Calu3 (cell line): ENCODE measurements at regions of chr22 and their contacts with region 1.

Region 1: GRCh38 chr22:35350539-35351503 is 30.1 kb upstream of the HMOX1 start:
- DNase-seq: peak; percentile 94
- H3K4me3 Mint-ChIP-seq: peak overlapping the region; percentile 96
- H3K27ac Mint-ChIP-seq: peak overlapping the region; percentile 57
- H3K4me1 Mint-ChIP-seq: peaks cover 20% of the 10 kb centered on the region
- H3K27me3 Mint-ChIP-seq: no peaks in the 10 kb centered on the region
- CTCF ChIP-seq: peak; percentile 93

Region 2: GRCh38 chr22:35399678-35400334 is 49.0 kb after region 1 on chr22 and contains the start of gene MCM5:
- CTCF ChIA-PET with region 1: no interaction called
- intact Hi-C with region 1: loop called (anchors 5 kb)
- DNase-seq: peak; percentile 97
- H3K4me3 Mint-ChIP-seq: peak within 1 kb of the TSS; percentile 100
- H3K27ac Mint-ChIP-seq: peak within 1 kb of the TSS; percentile 96
- H3K4me1 Mint-ChIP-seq: peaks cover 21% of the 10 kb centered on the region
- H3K27me3 Mint-ChIP-seq: no peaks in the 10 kb centered on the region
- CTCF ChIP-seq: no peak
- total RNA-seq, gene MCM5: 88.4 and 93.0 TPM in 2 replicates

Region 3: GRCh38 chr22:35430897-35431322 is 80.1 kb after region 1 on chr22:
- CTCF ChIA-PET with region 1: interaction called, 13 read pairs
- intact Hi-C with region 1: no loop called
- DNase-seq: peak; percentile 94
- H3K4me3 Mint-ChIP-seq: no peak overlapping the region
- H3K27ac Mint-ChIP-seq: no peak overlapping the region
- H3K4me1 Mint-ChIP-seq: no peaks in the 10 kb centered on the region
- H3K27me3 Mint-ChIP-seq: no peaks in the 10 kb centered on the region
- CTCF ChIP-seq: peak; percentile 97

Region 4: DNA sequence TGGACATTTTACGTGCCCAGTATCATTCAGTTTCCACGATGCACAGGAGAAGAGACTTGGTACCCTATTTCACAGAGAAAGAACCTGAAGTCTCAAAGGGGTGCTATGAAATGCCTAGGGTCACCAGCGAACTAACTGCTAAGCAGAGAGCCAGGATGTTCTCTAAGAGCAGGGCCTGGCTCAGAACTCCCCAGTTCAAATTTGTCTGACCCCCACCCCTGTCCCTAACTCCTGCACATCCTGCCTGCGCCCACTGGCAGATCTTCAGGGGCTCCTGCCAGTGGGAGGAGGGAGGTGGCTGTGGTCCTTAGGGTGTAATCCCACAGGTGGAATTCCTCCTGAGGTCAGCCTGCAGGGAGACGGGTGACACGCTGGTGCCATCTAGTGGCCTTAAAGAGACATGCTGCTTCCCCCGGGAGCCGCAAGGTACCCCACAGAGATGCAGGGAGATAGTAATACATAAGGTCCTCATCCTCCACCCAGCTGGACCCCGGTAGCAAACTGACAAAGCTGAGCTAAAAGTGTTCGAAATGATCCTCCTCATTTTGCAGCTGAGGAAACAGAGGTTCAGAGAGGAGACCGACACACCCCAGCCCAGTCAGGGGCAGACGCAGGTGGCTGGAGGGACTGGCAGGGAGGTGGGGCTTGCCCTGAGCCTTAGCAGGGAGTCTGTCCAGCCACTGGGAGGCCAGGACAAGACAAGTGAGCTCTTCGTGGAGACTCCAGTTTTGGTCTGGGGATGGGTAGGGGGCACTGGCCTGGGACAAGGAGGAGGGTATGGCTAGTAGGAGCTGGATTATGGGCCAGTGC is 232.2 kb after region 1 on chr22:
- CTCF ChIA-PET with region 1: no interaction called
- intact Hi-C with region 1: loop called (anchors 2 kb)
- DNase-seq: peak; percentile 69
- H3K4me3 Mint-ChIP-seq: no peak overlapping the region
- H3K27ac Mint-ChIP-seq: no peak overlapping the region
- H3K4me1 Mint-ChIP-seq: peaks cover 11% of the 10 kb centered on the region
- H3K27me3 Mint-ChIP-seq: peaks cover 9% of the 10 kb centered on the region
- CTCF ChIP-seq: peak; percentile 86

Region 5: GRCh38 chr22:35622191-35622913 is 271.5 kb after region 1 on chr22:
- CTCF ChIA-PET with region 1: interaction called, 3 read pairs
- intact Hi-C with region 1: loop called (anchors 2 kb)
- DNase-seq: peak; percentile 62
- H3K4me3 Mint-ChIP-seq: no peak overlapping the region
- H3K27ac Mint-ChIP-seq: no peak overlapping the region
- H3K4me1 Mint-ChIP-seq: peaks cover 30% of the 10 kb centered on the region
- H3K27me3 Mint-ChIP-seq: no peaks in the 10 kb centered on the region
- CTCF ChIP-seq: no peak

Region 6: GRCh38 chr22:36123673-36124630 is 773.1 kb after region 1 on chr22:
- CTCF ChIA-PET with region 1: no interaction called
- intact Hi-C with region 1: loop called (anchors 5 kb)
- DNase-seq: peak; percentile 93
- H3K4me3 Mint-ChIP-seq: peak overlapping the region; percentile 67
- H3K27ac Mint-ChIP-seq: peak overlapping the region; percentile 77
- H3K4me1 Mint-ChIP-seq: no peaks in the 10 kb centered on the region
- H3K27me3 Mint-ChIP-seq: peaks cover 31% of the 10 kb centered on the region
- CTCF ChIP-seq: peak; percentile 97